ENCODE measurements at regions of chr13 and their contacts with region 1.

Region 1: GRCh38 chr13:50359779-50360178 is 344.5 kb downstream of the KCNRG start:
- DNase-seq: no peak

Region 2: GRCh38 chr13:50229960-50230661 is 129.7 kb before region 1 on chr13:
- intact Hi-C with region 1: loop called in 1 of 2 experiments (anchors 5 kb)
- DNase-seq: no peak

Measured in posterior vena cava (tissue), 2 donors.